CD4-positive, alpha-beta memory T cell (primary cell): ENCODE measurements at regions of chr5 and their contacts with region 1.

Region 1: GRCh38 chr5:57221049-57221568 is 47.2 kb downstream of the GPBP1 start:
- DNase-seq: peak; percentile 44 to 76 (median 74)
- H3K4me3 ChIP-seq: no peak overlapping the region
- H3K4me3 Mint-ChIP-seq: peak overlapping the region in 2 of 8 donors; percentile 11 to 15
- H3K27ac ChIP-seq: no peak overlapping the region
- H3K27ac Mint-ChIP-seq: peak overlapping the region; percentile 24 to 90 (median 68)
- H3K4me1 ChIP-seq: peaks cover 38% of the 10 kb centered on the region
- H3K4me1 Mint-ChIP-seq: peaks cover 26 to 67% (median 44%) of the 10 kb centered on the region in 4 donors
- H3K27me3 ChIP-seq: no peaks in the 10 kb centered on the region
- H3K27me3 Mint-ChIP-seq: no peaks in the 10 kb centered on the region

Region 2: GRCh38 chr5:55936100-55936693 is 1284.9 kb before region 1 on chr5:
- CTCF ChIA-PET with region 1: interaction called, 3 read pairs
- POLR2A ChIA-PET with region 1: no interaction called
- intact Hi-C with region 1: loop called (anchors 5 kb)
- DNase-seq: peak; percentile 61 to 76 (median 65)
- H3K4me3 ChIP-seq: no peak overlapping the region
- H3K4me3 Mint-ChIP-seq: no peak overlapping the region
- H3K27ac ChIP-seq: no peak overlapping the region
- H3K27ac Mint-ChIP-seq: peak overlapping the region in 4 of 7 donors; percentile 25 to 73 (median 42)
- H3K4me1 ChIP-seq: peaks cover 5% of the 10 kb centered on the region
- H3K4me1 Mint-ChIP-seq: peaks cover 0 to 8% (median 4%) of the 10 kb centered on the region in 4 donors
- H3K27me3 ChIP-seq: no peaks in the 10 kb centered on the region
- H3K27me3 Mint-ChIP-seq: no peaks in the 10 kb centered on the region

Region 3: DNA sequence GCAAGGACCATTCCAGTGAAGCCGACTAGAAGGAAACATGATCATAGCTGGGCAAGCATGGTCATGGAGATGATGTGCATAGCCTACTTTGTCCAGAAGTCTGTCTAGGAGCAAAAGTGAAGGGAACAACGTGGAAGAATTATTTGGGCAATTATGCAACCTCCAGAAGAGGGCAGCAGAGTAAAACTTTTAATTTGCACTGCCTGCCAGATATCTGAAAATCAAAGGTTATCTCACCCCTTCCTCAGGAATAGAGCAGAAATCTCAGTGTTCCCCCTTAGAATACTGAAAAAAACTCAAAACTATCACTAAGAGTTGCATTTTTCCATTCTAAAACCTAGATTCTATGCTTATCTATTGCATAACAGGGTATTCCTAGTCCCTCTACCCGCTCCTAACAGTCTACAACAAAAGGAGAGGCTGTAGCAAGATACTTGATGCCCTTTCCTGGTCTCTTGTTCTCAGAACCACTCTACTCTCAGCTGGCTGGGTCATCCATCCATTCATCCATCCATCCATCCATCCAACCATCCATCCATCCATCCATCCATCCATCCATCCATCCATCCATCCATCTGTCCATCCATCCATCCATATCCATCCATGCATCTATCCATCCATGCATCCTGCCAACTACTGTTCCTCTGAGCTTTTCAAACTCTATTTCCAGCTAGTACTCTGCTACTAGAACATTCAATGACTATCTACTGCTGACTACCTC is 320.1 kb before region 1 on chr5:
- CTCF ChIA-PET with region 1: interaction called, 87 read pairs
- POLR2A ChIA-PET with region 1: interaction called, 4 read pairs
- intact Hi-C with region 1: loop called (anchors 1 kb)
- DNase-seq: peak in 4 of 5 donors; percentile 43 to 64 (median 54)
- H3K4me3 ChIP-seq: no peak overlapping the region
- H3K4me3 Mint-ChIP-seq: no peak overlapping the region
- H3K27ac ChIP-seq: no peak overlapping the region
- H3K27ac Mint-ChIP-seq: no peak overlapping the region
- H3K4me1 ChIP-seq: no peaks in the 10 kb centered on the region
- H3K4me1 Mint-ChIP-seq: peaks cover 2 to 6% (median 4%) of the 10 kb centered on the region in 4 donors
- H3K27me3 ChIP-seq: no peaks in the 10 kb centered on the region
- H3K27me3 Mint-ChIP-seq: no peaks in the 10 kb centered on the region

Region 4: DNA sequence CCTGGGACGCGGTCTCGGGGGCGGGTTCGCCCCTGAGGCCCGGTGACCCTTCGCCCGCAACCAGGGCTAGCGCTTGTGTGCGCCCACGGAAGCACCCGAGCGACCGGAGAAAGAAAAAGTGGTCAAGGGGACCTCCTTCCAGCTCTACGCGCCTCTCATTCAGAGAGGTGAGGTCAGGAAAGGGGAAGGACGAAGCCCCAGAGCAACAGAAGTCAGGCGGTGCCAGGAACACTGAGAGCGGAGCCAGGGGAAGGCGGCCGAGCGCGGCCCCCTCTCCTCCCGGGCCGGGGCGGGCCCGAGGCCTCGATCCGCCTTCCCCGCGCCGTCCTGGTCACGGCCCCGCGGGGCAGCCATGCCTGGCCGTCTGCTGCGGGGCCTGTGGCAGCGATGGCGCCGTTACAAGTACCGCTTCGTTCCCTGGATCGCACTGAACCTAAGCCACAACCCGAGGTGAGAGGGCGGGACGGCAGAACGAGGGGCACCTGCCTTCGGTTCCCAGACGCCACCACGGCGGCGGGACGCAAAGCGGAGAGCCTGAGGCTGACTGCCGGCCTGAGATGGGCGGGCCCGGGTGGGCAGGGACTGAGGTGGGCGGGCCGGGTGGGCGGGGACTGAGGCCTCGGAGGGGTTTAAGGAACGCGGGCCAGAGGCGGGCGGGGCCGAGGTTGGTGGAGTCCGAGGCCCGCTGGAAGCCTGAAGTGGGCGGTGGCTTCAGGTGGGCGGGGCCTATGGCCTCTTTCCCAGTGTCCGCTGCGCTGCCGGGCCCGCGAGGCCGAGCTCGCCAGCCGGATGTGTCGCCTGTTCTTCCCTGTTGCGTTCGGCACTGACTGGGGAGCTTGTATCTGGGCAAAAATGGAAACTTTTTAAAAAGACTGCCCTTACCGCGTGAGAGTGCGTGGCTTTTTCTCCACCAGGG is 311.6 kb before region 1 on chr5 and contains the start of gene SETD9:
- CTCF ChIA-PET with region 1: interaction called, 87 read pairs
- POLR2A ChIA-PET with region 1: interaction called, 3 read pairs
- intact Hi-C with region 1: no loop called
- DNase-seq: peak; percentile 76 to 83 (median 81)
- H3K4me3 ChIP-seq: peak within 1 kb of the TSS; percentile 88 to 97
- H3K4me3 Mint-ChIP-seq: peak within 1 kb of the TSS; percentile 89 to 98 (median 92)
- H3K27ac ChIP-seq: peak within 1 kb of the TSS; percentile 62
- H3K27ac Mint-ChIP-seq: peak within 1 kb of the TSS; percentile 65 to 95 (median 92)
- H3K4me1 ChIP-seq: peaks cover 15% of the 10 kb centered on the region
- H3K4me1 Mint-ChIP-seq: peaks cover 15 to 25% (median 17%) of the 10 kb centered on the region in 4 donors
- H3K27me3 ChIP-seq: no peaks in the 10 kb centered on the region
- H3K27me3 Mint-ChIP-seq: no peaks in the 10 kb centered on the region
- total RNA-seq, gene SETD9: 3.8 to 6.8 TPM

Region 5: GRCh38 chr5:56951946-56952691 is 269.0 kb before region 1 on chr5 and contains the start of gene MIER3:
- CTCF ChIA-PET with region 1: interaction called, 5 read pairs
- POLR2A ChIA-PET with region 1: interaction called, 3 read pairs
- intact Hi-C with region 1: loop called (anchors 2 kb)
- DNase-seq: peak; percentile 79 to 83 (median 80)
- H3K4me3 ChIP-seq: peak within 1 kb of the TSS; percentile 57 to 72
- H3K4me3 Mint-ChIP-seq: peak within 1 kb of the TSS; percentile 94 to 98 (median 96)
- H3K27ac ChIP-seq: peak within 1 kb of the TSS; percentile 53
- H3K27ac Mint-ChIP-seq: peak within 1 kb of the TSS; percentile 92 to 96 (median 95)
- H3K4me1 ChIP-seq: peaks cover 16% of the 10 kb centered on the region
- H3K4me1 Mint-ChIP-seq: peaks cover 14 to 25% (median 20%) of the 10 kb centered on the region in 4 donors
- H3K27me3 ChIP-seq: peaks cover 5% of the 10 kb centered on the region
- H3K27me3 Mint-ChIP-seq: peaks cover 6 to 12% of the 10 kb centered on the region in 2 donors
- total RNA-seq, gene MIER3: 27.8 to 32.8 TPM

Region 6: DNA sequence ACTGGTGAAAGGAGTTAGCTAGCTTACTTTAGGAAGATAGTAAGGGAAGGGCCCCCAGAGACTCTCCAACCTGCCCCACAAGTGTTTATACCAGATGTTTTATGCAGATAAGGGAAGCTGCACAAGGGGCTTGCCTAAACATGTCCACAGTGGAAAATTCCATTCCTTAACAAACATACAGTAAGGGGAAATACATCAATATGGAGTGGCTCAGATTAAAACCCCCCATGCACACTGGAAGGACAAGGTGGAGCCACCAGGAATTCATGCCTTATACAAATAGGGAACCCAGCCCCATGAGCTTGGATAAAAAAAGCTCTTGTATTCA is 153.5 kb before region 1 on chr5:
- CTCF ChIA-PET with region 1: no interaction called
- POLR2A ChIA-PET with region 1: no interaction called
- intact Hi-C with region 1: no loop called
- DNase-seq: no peak
- H3K4me3 ChIP-seq: no peak overlapping the region
- H3K4me3 Mint-ChIP-seq: no peak overlapping the region
- H3K27ac ChIP-seq: no peak overlapping the region
- H3K27ac Mint-ChIP-seq: no peak overlapping the region
- H3K4me1 ChIP-seq: no peaks in the 10 kb centered on the region
- H3K4me1 Mint-ChIP-seq: no peaks in the 10 kb centered on the region
- H3K27me3 ChIP-seq: no peaks in the 10 kb centered on the region
- H3K27me3 Mint-ChIP-seq: peaks cover 4 to 11% of the 10 kb centered on the region in 2 donors

Region 7: GRCh38 chr5:57173185-57174127 is 47.7 kb before region 1 on chr5 and contains the start of gene GPBP1:
- CTCF ChIA-PET with region 1: interaction called, 4 read pairs
- POLR2A ChIA-PET with region 1: no interaction called
- intact Hi-C with region 1: loop called (anchors 2 kb)
- DNase-seq: peak; percentile 98 to 99 (median 99)
- H3K4me3 ChIP-seq: peak within 1 kb of the TSS; percentile 70 to 87
- H3K4me3 Mint-ChIP-seq: peak within 1 kb of the TSS; percentile 96 to 99 (median 98)
- H3K27ac ChIP-seq: peak within 1 kb of the TSS; percentile 99
- H3K27ac Mint-ChIP-seq: peak within 1 kb of the TSS; percentile 98 to 100 (median 99)
- H3K4me1 ChIP-seq: peaks cover 37% of the 10 kb centered on the region
- H3K4me1 Mint-ChIP-seq: peaks cover 14 to 53% (median 25%) of the 10 kb centered on the region in 4 donors
- H3K27me3 ChIP-seq: no peaks in the 10 kb centered on the region
- H3K27me3 Mint-ChIP-seq: no peaks in the 10 kb centered on the region
- total RNA-seq, gene GPBP1: 136 to 137 TPM

Region 8: DNA sequence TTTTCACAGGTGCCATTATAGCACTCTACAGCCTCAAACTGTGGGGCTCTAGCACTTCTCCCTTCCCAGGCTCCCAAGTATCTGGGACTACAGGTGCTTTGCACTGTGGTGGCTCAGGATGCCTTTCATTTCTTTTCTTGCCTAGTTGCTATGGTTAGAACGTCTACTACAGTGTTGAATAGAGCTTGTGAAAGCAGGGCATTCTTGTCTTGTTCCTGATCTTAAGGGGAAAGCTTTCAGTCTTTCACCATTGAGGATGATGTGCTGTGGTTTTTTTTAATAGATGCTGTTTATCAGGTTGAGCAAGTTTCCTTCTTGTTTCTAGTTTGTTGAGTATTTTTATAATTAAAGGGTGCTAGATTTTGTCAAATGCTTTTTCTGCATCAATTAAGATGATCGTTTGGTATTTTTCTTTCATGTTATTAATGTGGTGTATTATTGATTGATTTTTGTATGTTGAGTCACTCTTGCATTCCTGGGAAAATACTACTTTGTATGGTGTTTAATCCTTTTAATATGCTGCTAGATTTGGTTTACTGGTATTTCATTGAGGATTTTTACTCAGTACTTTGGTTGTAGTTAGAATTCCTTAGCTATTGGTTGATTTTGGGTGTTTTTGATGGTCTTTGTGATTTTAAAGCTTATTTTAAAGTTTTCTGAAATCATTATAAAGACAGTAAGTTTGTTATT is 11.6 kb before region 1 on chr5:
- CTCF ChIA-PET with region 1: interaction called, 10 read pairs
- POLR2A ChIA-PET with region 1: interaction called, 3 read pairs
- intact Hi-C with region 1: no loop called
- DNase-seq: no peak
- H3K4me3 ChIP-seq: no peak overlapping the region
- H3K4me3 Mint-ChIP-seq: peak overlapping the region in 7 of 8 donors; percentile 11 to 65 (median 55)
- H3K27ac ChIP-seq: no peak overlapping the region
- H3K27ac Mint-ChIP-seq: peak overlapping the region; percentile 38 to 88 (median 62)
- H3K4me1 ChIP-seq: peaks cover 60% of the 10 kb centered on the region
- H3K4me1 Mint-ChIP-seq: peaks cover 48 to 83% (median 63%) of the 10 kb centered on the region in 4 donors
- H3K27me3 ChIP-seq: no peaks in the 10 kb centered on the region
- H3K27me3 Mint-ChIP-seq: no peaks in the 10 kb centered on the region